CD4-positive, alpha-beta T cell (primary cell): ENCODE measurements at regions of chr9 and their contacts with region 1.

Region 1: DNA sequence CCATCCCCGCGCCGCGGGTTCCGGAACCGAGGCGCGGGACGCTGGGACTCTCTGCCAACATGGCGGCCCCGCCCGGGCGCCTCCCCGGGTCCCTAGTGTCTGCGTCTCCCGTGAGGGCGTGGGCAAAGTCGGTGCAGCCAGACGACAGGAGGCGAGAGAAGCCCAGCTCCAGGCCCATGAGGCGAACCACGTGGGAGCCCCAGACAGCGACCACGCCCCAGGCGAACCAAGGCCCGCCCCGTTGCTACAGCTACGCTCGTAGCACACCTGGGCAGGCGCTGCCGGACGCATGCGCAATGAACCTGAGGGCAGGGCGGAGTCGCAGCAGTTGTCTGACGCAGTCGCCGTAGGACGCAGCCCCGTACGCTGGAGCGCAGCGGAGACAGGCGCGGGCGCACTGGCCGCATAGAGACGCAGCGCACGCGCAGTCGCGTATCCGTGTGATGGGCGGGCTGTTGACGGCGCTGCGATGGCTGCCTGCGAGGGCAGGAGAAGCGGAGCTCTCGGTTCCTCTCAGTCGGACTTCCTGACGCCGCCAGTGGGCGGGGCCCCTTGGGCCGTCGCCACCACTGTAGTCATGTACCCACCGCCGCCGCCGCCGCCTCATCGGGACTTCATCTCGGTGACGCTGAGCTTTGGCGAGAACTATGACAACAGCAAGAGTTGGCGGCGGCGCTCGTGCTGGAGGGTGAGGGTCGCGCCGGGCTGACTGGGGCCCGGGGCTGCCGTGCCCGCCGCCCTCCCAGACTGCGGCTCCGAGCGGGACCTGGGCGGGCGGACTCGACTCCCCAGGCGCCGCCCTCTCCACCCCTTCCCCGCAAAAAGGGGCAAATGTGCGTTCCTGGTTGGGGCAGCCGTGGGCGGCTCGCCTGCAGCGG is at the start of gene MAN1B1:
- DNase-seq: peak; percentile 98 to 100 (median 100)
- ATAC-seq: peak; percentile 79
- H3K4me3 ChIP-seq: peak within 1 kb of the TSS; percentile 71
- H3K4me3 Mint-ChIP-seq: peak within 1 kb of the TSS; percentile 93
- H3K27ac ChIP-seq: peak within 1 kb of the TSS; percentile 79 to 90
- H3K27ac Mint-ChIP-seq: peak within 1 kb of the TSS; percentile 89
- H3K4me1 ChIP-seq: peaks cover 22% of the 10 kb centered on the region
- H3K4me1 Mint-ChIP-seq: peaks cover 32% of the 10 kb centered on the region
- H3K27me3 ChIP-seq: no peaks in the 10 kb centered on the region
- H3K27me3 Mint-ChIP-seq: no peaks in the 10 kb centered on the region
- CTCF ChIP-seq: no peak
- total RNA-seq, gene MAN1B1: 60.9 to 66.9 TPM

Region 2: GRCh38 chr9:137070201-137070905 is 16.4 kb before region 1 on chr9 and contains the start of gene SAPCD2:
- CTCF ChIA-PET with region 1: interaction called, 6 read pairs
- POLR2A ChIA-PET with region 1: interaction called, 62 read pairs
- intact Hi-C with region 1: loop called (anchors 1 to 2 kb)
- DNase-seq: peak; percentile 68 to 94 (median 78)
- ATAC-seq: peak; percentile 88
- H3K4me3 ChIP-seq: peak within 1 kb of the TSS; percentile 45
- H3K4me3 Mint-ChIP-seq: peak within 1 kb of the TSS; percentile 82
- H3K27ac ChIP-seq: no peak within 1 kb of the TSS
- H3K27ac Mint-ChIP-seq: peak within 1 kb of the TSS; percentile 24
- H3K4me1 ChIP-seq: peaks cover 28% of the 10 kb centered on the region
- H3K4me1 Mint-ChIP-seq: peaks cover 16% of the 10 kb centered on the region
- H3K27me3 ChIP-seq: peaks cover 0 to 8% of the 10 kb centered on the region in 2 experiments
- H3K27me3 Mint-ChIP-seq: peaks cover 4% of the 10 kb centered on the region
- CTCF ChIP-seq: no peak
- total RNA-seq, gene SAPCD2: 0.17 to 0.19 TPM

Region 3: DNA sequence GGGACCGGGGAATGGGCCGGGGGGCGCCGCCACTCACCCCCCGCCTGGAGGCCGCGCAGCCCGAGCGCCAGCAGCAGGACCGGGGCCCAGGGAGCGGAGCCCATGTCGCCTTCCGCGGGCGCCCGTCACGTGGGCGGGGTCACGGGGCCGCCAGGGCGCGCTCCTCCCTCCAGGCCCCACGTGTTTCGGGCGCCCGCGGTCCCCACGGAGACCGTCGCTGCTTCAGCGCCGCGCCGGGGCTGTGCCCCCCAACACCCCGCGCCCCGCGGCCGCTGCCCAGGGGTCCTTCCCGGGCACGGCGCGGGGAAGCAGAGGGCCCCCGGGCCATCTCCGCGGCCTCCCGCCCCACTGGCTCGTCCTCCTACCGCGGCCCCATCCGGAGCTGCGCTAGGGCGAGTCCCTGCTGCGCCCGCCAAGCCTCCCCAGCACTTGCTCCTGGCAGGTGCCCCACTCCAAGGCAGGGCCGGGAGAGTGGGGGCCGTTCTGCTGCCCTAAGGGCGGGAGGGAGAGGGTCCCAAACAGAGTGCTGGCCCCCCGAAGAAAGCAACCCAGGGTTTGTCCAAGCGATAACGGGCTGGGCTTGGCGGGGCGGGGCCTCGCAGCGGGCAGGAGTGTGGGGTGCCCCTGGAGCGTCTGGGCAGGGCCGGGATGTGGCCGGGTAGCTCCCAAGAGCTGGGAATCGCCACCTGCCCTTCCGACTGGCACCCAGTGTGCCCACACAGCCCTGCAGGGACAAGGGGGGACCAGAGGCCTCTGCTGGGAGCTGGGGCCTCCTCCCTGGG is 28.0 kb after region 1 on chr9 and contains the start of gene DPP7:
- CTCF ChIA-PET with region 1: no interaction called
- POLR2A ChIA-PET with region 1: interaction called, 11 read pairs
- intact Hi-C with region 1: loop called in 1 of 2 experiments (anchors 1 kb)
- DNase-seq: peak; percentile 58 to 92 (median 76)
- ATAC-seq: peak; percentile 94
- H3K4me3 ChIP-seq: peak within 1 kb of the TSS; percentile 54
- H3K4me3 Mint-ChIP-seq: peak within 1 kb of the TSS; percentile 79
- H3K27ac ChIP-seq: peak within 1 kb of the TSS in 1 of 2 donors; percentile 46
- H3K27ac Mint-ChIP-seq: peak within 1 kb of the TSS; percentile 44
- H3K4me1 ChIP-seq: peaks cover 28% of the 10 kb centered on the region
- H3K4me1 Mint-ChIP-seq: no peaks in the 10 kb centered on the region
- H3K27me3 ChIP-seq: no peaks in the 10 kb centered on the region
- H3K27me3 Mint-ChIP-seq: no peaks in the 10 kb centered on the region
- CTCF ChIP-seq: no peak
- total RNA-seq, gene DPP7: 344 to 349 TPM

Region 4: DNA sequence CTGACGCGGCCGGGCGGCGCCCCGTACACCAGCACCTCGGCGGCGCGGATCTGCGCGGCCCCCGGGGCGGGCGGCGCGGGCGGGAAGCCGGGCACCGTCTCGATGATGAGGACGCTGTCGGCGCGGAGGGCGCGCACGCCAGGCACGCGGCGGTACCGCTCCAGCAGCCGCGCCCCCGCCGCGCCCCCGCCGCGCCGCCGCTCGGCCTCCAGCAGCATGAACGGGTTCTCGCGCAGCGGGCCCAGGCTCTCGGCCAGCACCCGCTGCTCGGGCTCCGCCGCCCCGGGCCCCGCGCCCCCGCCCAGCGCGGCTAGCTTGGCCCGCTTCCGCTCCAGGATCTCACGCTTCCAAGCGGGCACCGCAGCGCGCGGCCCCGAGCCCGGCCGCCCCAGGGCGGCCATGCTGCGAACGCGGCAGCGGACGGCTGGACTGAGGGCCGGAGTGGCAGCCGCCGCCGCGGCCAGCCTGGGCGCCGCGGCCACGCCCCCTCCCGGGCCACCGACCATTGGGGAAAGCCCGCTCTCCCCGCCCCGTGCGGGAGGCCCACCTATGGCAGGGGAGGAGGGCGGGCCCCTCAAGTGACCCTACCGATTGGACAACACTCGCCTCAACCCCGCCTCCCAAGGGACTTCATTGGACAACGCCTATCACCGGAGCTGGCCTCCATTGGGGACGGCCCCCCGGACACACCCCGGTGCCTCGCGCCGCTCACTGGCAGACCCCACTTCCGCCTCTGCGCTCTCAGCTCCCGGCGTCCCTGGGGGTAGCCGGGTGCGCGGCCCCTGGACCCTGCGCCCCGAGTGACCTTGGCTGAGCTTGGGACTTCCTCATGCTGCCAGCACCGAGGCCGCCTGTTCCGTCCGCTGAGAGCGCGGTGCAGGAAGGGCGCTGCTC is 113.8 kb after region 1 on chr9 and contains the start of gene TPRN:
- CTCF ChIA-PET with region 1: interaction called, 3 read pairs
- POLR2A ChIA-PET with region 1: interaction called, 17 read pairs
- intact Hi-C with region 1: no loop called
- DNase-seq: peak; percentile 93 to 99 (median 98)
- ATAC-seq: peak; percentile 94
- H3K4me3 ChIP-seq: peak within 1 kb of the TSS; percentile 87
- H3K4me3 Mint-ChIP-seq: peak within 1 kb of the TSS; percentile 93
- H3K27ac ChIP-seq: peak within 1 kb of the TSS; percentile 72 to 76
- H3K27ac Mint-ChIP-seq: peak within 1 kb of the TSS; percentile 84
- H3K4me1 ChIP-seq: peaks cover 48% of the 10 kb centered on the region
- H3K4me1 Mint-ChIP-seq: peaks cover 23% of the 10 kb centered on the region
- H3K27me3 ChIP-seq: no peaks in the 10 kb centered on the region
- H3K27me3 Mint-ChIP-seq: no peaks in the 10 kb centered on the region
- CTCF ChIP-seq: no peak
- total RNA-seq, gene TPRN: 6.1 to 8.6 TPM

Region 5: GRCh38 chr9:137254624-137255447 is 168.1 kb after region 1 on chr9 and contains the start of gene NELFB:
- CTCF ChIA-PET with region 1: no interaction called
- POLR2A ChIA-PET with region 1: interaction called, 11 read pairs
- intact Hi-C with region 1: no loop called
- DNase-seq: peak; percentile 87 to 98 (median 96)
- ATAC-seq: peak; percentile 94
- H3K4me3 ChIP-seq: peak within 1 kb of the TSS; percentile 90
- H3K4me3 Mint-ChIP-seq: peak within 1 kb of the TSS; percentile 94
- H3K27ac ChIP-seq: no peak within 1 kb of the TSS
- H3K27ac Mint-ChIP-seq: peak within 1 kb of the TSS; percentile 82
- H3K4me1 ChIP-seq: peaks cover 25% of the 10 kb centered on the region
- H3K4me1 Mint-ChIP-seq: peaks cover 16% of the 10 kb centered on the region
- H3K27me3 ChIP-seq: no peaks in the 10 kb centered on the region
- H3K27me3 Mint-ChIP-seq: no peaks in the 10 kb centered on the region
- CTCF ChIP-seq: no peak
- total RNA-seq, gene NELFB: 20.7 to 21.2 TPM